ENCODE measurements at regions of chrX and their contacts with region 1.

Region 1: GRCh38 chrX:17788439-17788838 is 51.1 kb downstream of the SCML1 start:
- DNase-seq: peak; percentile 59
- H3K4me3 Mint-ChIP-seq: no peak overlapping the region
- H3K27ac Mint-ChIP-seq: no peak overlapping the region
- H3K4me1 Mint-ChIP-seq: peaks cover 15% of the 10 kb centered on the region
- H3K27me3 Mint-ChIP-seq: no peaks in the 10 kb centered on the region

Region 2: DNA sequence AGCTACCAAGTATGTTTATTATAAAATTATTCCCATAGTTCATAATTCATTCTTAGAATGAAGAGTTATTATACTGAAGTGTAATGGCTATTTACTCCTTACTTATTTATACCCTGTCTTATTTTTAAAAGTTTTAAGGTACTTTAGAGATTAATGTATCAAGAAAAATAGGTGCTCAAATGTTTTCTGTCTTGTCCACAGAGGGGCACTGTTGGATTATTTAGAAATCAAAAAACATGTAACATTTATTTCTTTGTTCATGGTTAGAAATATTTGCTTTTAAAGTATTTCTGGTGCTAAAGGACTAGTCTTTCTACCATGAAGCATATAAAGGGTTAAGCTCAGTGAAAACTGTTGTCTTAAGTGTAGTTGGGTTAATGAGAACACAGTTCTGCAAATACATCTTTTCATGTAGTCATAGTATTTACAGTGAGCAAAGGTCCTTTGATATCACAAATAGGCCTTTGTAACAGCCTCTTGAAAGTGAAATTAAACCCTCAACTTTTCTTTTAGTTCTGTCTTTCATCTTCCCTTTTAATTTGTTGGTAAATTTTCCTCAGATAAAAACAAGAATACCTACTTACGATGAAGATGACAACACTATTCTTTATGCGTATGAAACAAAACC is 43.4 kb before region 1 on chrX:
- CTCF ChIA-PET with region 1: no interaction called
- intact Hi-C with region 1: loop called (anchors 1 kb)
- DNase-seq: no peak
- H3K4me3 Mint-ChIP-seq: no peak overlapping the region
- H3K27ac Mint-ChIP-seq: no peak overlapping the region
- H3K4me1 Mint-ChIP-seq: peaks cover 35% of the 10 kb centered on the region
- H3K27me3 Mint-ChIP-seq: no peaks in the 10 kb centered on the region

Region 3: GRCh38 chrX:17860811-17861488 is 72.5 kb after region 1 on chrX and contains the start of gene RAI2:
- CTCF ChIA-PET with region 1: no interaction called
- intact Hi-C with region 1: loop called (anchors 10 kb)
- DNase-seq: peak; percentile 28
- H3K4me3 Mint-ChIP-seq: peak within 1 kb of the TSS; percentile 76
- H3K27ac Mint-ChIP-seq: no peak within 1 kb of the TSS
- H3K4me1 Mint-ChIP-seq: peaks cover 8% of the 10 kb centered on the region
- H3K27me3 Mint-ChIP-seq: peaks cover 22% of the 10 kb centered on the region
- total RNA-seq, gene RAI2: 0.50 to 0.59 TPM

Region 4: GRCh38 chrX:18210470-18210869 is 422.0 kb after region 1 on chrX:
- CTCF ChIA-PET with region 1: no interaction called
- intact Hi-C with region 1: loop called (anchors 1 kb)
- DNase-seq: no peak
- H3K4me3 Mint-ChIP-seq: no peak overlapping the region
- H3K27ac Mint-ChIP-seq: no peak overlapping the region
- H3K4me1 Mint-ChIP-seq: no peaks in the 10 kb centered on the region
- H3K27me3 Mint-ChIP-seq: no peaks in the 10 kb centered on the region

Measured in activated naive CD4-positive, alpha-beta T cell treated with anti-CD3 and anti-CD28 coated beads for 36 hours (primary cell).